ENCODE measurements at regions of chr20 and their contacts with region 1.

Region 1: GRCh38 chr20:45293041-45294002 is 13.3 kb upstream of the RBPJL start:
- DNase-seq: peak; percentile 86 to 91
- H3K4me3 ChIP-seq: peak overlapping the region; percentile 51 to 61 (median 60)
- H3K27ac ChIP-seq: peak overlapping the region in 3 of 5 donors; percentile 48 to 64 (median 53)
- H3K4me1 ChIP-seq: peaks cover 4 to 24% (median 16%) of the 10 kb centered on the region in 4 donors
- H3K27me3 ChIP-seq: peaks cover 0 to 59% (median 10%) of the 10 kb centered on the region in 3 donors
- CTCF ChIP-seq: peak in 5 of 7 experiments; percentile 67 to 98 (median 92)
- EP300 ChIP-seq: no peak
- POLR2A ChIP-seq: no peak

Region 2: DNA sequence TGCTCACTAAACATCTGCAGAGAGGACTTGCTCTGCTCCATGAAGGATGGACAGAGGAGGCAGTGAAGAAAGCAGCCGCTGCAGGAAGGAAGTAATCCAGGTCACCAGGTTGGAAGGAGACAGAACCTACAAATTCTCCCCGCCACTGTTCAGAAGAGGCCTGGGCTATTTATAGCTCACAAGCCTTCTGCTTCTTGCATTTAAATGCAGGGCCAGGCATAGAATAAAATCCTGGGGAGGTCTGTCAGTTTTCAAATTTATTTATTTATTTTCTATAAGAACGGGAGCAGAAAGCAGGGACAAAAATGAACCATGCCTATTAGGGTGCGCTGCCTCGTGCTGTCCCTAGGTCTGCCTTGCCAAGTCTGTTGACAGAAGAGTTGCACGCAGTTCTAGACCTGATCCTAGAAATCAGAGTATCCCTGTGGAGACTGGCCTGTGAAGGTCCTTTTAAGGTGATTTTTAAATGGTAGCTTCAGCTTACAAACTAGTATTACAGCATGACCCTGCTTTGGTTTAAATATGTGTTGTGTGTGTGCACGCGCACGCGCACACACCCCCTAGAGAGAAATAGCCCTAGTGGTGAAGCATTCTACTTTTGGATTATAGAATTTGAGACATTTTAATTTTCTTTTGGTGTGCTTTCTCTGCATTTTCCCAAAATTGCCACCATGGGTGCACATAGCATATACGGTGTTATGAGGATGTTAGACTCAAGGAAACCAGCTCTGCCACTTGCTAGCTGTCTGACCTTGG is 502.5 kb before region 1 on chr20:
- intact Hi-C with region 1: no loop called
- DNase-seq: no peak
- H3K4me3 ChIP-seq: no peak overlapping the region
- H3K27ac ChIP-seq: no peak overlapping the region
- H3K4me1 ChIP-seq: no peaks in the 10 kb centered on the region
- H3K27me3 ChIP-seq: peaks cover 0 to 36% (median 0%) of the 10 kb centered on the region in 3 donors
- CTCF ChIP-seq: no peak
- EP300 ChIP-seq: no peak
- POLR2A ChIP-seq: no peak

Region 3: GRCh38 chr20:45011108-45011526 is 282.2 kb before region 1 on chr20:
- intact Hi-C with region 1: loop called (anchors 10 kb)
- DNase-seq: peak; percentile 57 to 79
- H3K4me3 ChIP-seq: no peak overlapping the region
- H3K27ac ChIP-seq: no peak overlapping the region
- H3K4me1 ChIP-seq: peaks cover 0 to 34% (median 4%) of the 10 kb centered on the region in 4 donors
- H3K27me3 ChIP-seq: no peaks in the 10 kb centered on the region
- CTCF ChIP-seq: peak in 5 of 7 experiments; percentile 40 to 60 (median 49)
- EP300 ChIP-seq: no peak
- POLR2A ChIP-seq: no peak